ENCODE measurements at regions of chr16 and their contacts with region 1.

Region 1: GRCh38 chr16:4957720-4958509 is at the start of gene SEC14L5:
- DNase-seq: peak; percentile 93
- H3K4me3 ChIP-seq: peak within 1 kb of the TSS; percentile 73 to 87 (median 77)
- H3K27ac ChIP-seq: peak within 1 kb of the TSS; percentile 18
- H3K4me1 ChIP-seq: peaks cover 13% of the 10 kb centered on the region
- H3K27me3 ChIP-seq: no peaks in the 10 kb centered on the region
- CTCF ChIP-seq: no peak
- total RNA-seq, gene SEC14L5: under 0.01 TPM in 1 of 2 donors, not detected in the other

Region 2: DNA sequence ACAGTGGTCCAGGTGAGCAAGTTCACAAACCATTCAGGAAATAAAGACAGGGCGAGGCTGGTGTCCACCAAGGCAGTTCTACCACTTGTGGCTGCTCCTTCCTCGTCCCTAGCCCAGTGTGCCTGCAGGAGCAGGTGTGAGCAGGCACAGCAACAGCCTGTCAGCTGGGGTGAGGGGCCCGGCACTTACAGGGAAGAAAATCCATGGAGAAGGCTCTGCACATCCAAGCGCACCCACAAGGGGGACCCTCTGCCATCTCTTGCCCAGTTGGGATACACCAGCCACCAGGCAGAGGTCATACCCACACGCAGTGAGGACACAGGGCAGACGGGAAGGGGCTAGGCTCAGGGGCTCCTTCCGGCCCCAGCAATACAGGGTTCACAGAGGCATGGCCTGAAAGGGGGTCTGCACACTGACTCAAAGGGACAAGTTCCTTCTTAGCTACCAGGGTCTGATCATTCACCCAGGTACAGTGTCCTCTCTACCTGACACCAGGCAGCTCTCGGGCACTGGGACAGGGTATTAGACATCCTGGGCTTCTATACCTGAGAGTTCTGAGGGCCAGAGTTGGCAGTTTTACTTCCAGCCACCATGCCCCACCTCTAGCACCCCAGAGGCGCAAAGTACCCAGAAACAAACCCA is 446.4 kb before region 1 on chr16:
- CTCF ChIA-PET with region 1: no interaction called
- dilution Hi-C with region 1: no loop called
- in situ Hi-C with region 1: no loop called
- intact Hi-C with region 1: loop called (anchors 1 kb)
- DNase-seq: peak; percentile 30
- H3K4me3 ChIP-seq: no peak overlapping the region
- H3K27ac ChIP-seq: no peak overlapping the region
- H3K4me1 ChIP-seq: peaks cover 9% of the 10 kb centered on the region
- H3K27me3 ChIP-seq: no peaks in the 10 kb centered on the region
- CTCF ChIP-seq: peak; percentile 33 to 59

Region 3: DNA sequence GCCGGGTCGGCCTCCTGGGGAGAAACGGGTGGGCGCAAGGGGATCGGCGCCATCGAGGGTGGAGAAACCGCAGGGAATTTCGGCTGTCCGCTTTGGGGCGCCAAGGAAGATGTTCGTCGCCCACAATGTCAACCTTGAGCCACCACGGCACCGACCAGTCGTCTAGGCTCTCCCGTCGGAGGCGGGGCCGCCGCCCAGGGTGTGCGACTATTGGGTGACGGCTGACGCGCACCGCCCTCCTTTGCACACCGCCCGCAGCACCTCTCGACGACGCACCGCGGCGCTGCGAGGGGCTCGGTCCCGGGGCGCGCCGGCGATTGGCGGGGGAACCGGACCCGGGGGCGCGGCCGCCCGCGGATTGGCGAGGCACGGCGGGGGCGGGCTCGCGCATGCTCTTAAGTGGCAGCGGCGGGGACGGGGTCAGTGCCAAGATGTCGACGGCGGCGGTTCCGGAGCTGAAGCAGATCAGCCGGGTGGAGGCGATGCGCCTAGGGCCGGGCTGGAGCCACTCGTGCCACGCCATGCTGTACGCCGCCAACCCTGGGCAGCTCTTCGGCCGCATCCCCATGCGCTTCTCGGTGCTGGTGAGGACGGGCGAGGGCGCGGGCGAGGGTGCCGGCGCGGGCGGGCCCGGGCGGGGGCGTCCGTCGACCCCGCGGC is 264.5 kb before region 1 on chr16 and contains the start of gene NUDT16L1:
- CTCF ChIA-PET with region 1: no interaction called
- dilution Hi-C with region 1: no loop called
- in situ Hi-C with region 1: no loop called
- intact Hi-C with region 1: loop called (anchors 2 kb)
- DNase-seq: peak; percentile 96
- H3K4me3 ChIP-seq: peak within 1 kb of the TSS; percentile 77 to 95 (median 91)
- H3K27ac ChIP-seq: peak within 1 kb of the TSS; percentile 3
- H3K4me1 ChIP-seq: peaks cover 19% of the 10 kb centered on the region
- H3K27me3 ChIP-seq: no peaks in the 10 kb centered on the region
- CTCF ChIP-seq: peak in 1 of 2 donors; percentile 19
- total RNA-seq, gene NUDT16L1: 13.5 to 26.2 TPM

Region 4: GRCh38 chr16:4766874-4767628 is 190.9 kb before region 1 on chr16 and contains the start of gene ZNF500:
- CTCF ChIA-PET with region 1: no interaction called
- dilution Hi-C with region 1: no loop called
- in situ Hi-C with region 1: no loop called
- intact Hi-C with region 1: loop called (anchors 2 kb)
- DNase-seq: peak; percentile 91
- H3K4me3 ChIP-seq: peak within 1 kb of the TSS; percentile 73 to 89 (median 78)
- H3K27ac ChIP-seq: peak within 1 kb of the TSS; percentile 88
- H3K4me1 ChIP-seq: peaks cover 14% of the 10 kb centered on the region
- H3K27me3 ChIP-seq: no peaks in the 10 kb centered on the region
- CTCF ChIP-seq: no peak
- total RNA-seq, gene ZNF500: 13.0 to 14.2 TPM

Region 5: GRCh38 chr16:4846891-4847773 is 110.8 kb before region 1 on chr16 and contains the starts of genes GLYR1 and UBN1:
- CTCF ChIA-PET with region 1: no interaction called
- dilution Hi-C with region 1: no loop called
- in situ Hi-C with region 1: loop called in 1 of 2 experiments (anchors 5 kb)
- intact Hi-C with region 1: loop called (anchors 1 kb)
- DNase-seq: peak; percentile 97
- H3K4me3 ChIP-seq: peak within 1 kb of the TSS; percentile 65 to 93 (median 89)
- H3K27ac ChIP-seq: peak within 1 kb of the TSS; percentile 83
- H3K4me1 ChIP-seq: peaks cover 34% of the 10 kb centered on the region
- H3K27me3 ChIP-seq: no peaks in the 10 kb centered on the region
- CTCF ChIP-seq: peak in 1 of 2 donors; percentile 1
- total RNA-seq, gene GLYR1: 38.0 to 67.7 TPM
- total RNA-seq, gene UBN1: 23.7 to 37.2 TPM

Region 6: DNA sequence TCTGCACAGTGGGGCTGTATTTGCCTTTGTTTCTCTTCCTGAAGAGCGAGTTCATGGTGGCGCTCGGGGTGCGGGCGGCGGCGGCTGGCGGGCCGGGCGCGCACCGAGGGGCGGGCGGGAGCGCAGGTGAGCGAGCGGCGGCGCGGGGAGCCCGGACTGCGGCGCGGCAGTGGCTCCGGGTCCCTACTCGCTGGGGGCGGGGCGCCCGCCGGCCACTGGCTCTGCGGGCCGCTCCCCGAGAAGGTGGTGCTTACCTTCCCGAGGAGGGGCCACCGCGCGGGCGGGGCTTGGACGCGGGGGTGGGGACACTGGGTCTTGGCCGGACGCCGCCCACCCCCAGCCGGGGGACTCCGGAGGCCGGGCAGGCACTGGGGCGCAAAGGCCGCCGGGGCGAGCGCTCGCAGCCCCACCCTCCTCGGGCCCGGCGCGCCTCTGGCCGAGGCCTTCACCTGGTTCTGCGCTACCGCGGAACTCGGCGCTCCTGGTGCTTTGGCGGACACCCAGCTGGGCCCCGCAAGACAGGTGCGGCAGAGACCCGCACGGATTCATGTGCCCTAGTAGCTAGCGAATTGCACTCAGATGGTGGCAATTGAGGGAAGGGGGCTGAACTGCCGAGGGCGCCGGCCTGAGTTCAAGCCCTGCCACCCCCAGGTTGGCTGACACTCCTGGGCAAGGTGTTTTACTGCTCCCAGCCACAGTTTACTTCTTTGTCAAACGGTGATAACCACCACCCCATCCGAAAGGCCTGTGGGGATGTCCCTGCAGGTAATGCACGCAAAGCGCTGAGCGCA is 20.7 kb before region 1 on chr16 and contains the start of gene PPL:
- CTCF ChIA-PET with region 1: no interaction called
- dilution Hi-C with region 1: no loop called
- in situ Hi-C with region 1: no loop called
- intact Hi-C with region 1: loop called (anchors 2 kb)
- DNase-seq: peak; percentile 78
- H3K4me3 ChIP-seq: peak within 1 kb of the TSS; percentile 94 to 98 (median 95)
- H3K27ac ChIP-seq: peak within 1 kb of the TSS; percentile 61
- H3K4me1 ChIP-seq: peaks cover 27% of the 10 kb centered on the region
- H3K27me3 ChIP-seq: no peaks in the 10 kb centered on the region
- CTCF ChIP-seq: no peak
- total RNA-seq, gene PPL: 58.1 to 73.2 TPM

Measured in mammary epithelial cell (primary cell).